Gastrocnemius medialis (tissue), 4 donors: ENCODE measurements at regions of chr17 and their contacts with region 1.

Region 1: DNA sequence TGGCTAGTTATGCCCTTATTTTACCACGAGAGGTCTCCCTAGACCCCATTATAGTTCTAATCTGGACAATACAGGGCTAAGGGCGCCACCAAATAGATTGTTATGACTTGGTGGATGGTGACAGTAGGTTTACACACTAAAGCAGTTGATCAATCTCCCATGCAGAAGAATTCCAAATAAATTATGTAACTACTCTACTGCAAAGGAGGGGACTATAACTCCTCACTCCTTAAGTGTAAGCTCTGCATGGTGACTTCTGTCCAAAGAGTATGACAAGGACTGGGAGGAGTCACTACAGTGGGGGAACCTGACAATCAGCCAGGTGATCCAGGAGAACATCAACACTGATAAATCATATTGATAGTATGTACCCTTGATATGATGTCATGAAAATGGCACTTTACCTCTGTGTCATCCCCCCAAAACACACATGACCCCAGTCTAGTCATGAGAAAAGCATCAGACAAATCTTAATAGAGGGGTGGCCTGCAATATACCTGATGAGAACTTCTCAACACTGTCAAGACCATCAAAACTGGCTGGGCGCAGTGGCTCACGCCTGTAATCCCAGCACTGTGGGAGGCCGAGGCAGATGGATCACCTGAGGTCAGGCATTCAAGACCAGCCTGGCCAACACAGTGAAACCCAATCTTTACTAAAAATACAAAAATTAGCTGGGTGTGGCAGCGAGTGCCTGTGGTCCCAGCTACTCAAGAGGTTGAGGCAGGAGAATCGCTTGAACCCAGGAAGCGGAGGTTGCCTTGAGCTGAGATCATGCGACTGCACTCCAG is 20.1 kb upstream of the YPEL2 start:
- DNase-seq: no peak
- ATAC-seq: peak; percentile 96 to 99
- H3K4me3 ChIP-seq: no peak overlapping the region
- H3K27ac ChIP-seq: no peak overlapping the region
- H3K4me1 ChIP-seq: peaks cover 6% of the 10 kb centered on the region in 2 donors
- H3K27me3 ChIP-seq: no peaks in the 10 kb centered on the region
- CTCF ChIP-seq: peak; percentile 81 to 89 (median 87)
- POLR2A ChIP-seq: no peak

Region 2: DNA sequence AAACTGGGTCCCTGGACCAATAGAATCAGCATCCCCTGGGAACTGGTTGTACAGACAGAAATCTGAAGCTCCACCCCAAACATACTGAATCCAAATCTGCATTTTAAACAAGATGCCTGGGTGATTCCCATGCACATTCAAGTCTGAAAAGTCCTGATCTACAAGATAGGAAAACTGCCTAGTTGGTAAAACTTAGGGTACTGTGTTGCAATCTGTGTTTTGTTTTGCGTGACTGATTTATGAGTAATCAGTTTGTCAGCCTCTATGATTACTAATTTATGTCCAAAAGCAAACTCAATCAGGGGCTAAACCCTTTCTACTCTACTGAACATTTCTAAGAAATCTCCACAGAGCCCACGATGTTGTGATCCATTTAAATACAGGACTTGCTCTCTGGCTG is 123.9 kb after region 1 on chr17:
- in situ Hi-C with region 1: loop called in 3 of 4 experiments (anchors 5 kb)
- intact Hi-C with region 1: loop called (anchors 1 kb)
- DNase-seq: no peak
- ATAC-seq: peak in 1 of 2 donors; percentile 55
- H3K4me3 ChIP-seq: no peak overlapping the region
- H3K27ac ChIP-seq: peak overlapping the region in 1 of 4 donors; percentile 15
- H3K4me1 ChIP-seq: peaks cover 17 to 34% of the 10 kb centered on the region in 2 donors
- H3K27me3 ChIP-seq: no peaks in the 10 kb centered on the region
- CTCF ChIP-seq: no peak
- POLR2A ChIP-seq: no peak

Region 3: DNA sequence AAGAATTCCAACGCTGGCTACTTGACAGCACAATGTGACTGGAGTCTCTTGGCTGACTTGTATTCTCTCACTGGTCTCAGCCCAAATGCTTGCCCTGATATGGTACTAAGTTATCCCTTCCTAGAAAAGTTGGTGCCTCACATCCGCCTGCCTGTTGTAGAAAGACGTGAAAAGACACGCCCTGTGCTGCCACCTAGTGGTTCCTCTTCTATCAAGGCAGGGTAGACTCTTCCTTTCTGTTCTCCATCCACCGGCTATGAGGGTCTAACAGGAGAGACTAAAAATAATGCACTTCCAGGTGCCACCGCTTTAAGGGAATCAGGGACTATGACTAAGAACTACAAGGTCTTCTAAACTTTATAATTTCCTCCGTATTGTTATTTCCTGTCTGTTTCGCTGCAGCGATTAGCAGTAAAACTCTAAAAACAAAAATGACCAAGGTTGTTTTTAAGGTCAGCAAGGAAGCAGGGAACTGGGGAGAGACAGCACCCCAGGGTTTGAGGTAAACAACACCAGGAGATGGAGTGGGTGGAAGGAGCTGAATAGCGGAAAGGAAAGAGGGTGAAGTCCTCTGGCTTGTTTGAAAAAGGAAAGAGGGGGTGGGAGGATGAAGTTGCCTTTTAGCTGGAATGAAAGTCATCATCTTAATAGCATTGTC is 129.6 kb after region 1 on chr17:
- in situ Hi-C with region 1: loop called in 3 of 4 experiments (anchors 5 kb)
- intact Hi-C with region 1: loop called (anchors 1 kb)
- DNase-seq: peak; percentile 82 to 89
- ATAC-seq: peak; percentile 94 to 99
- H3K4me3 ChIP-seq: no peak overlapping the region
- H3K27ac ChIP-seq: peak overlapping the region; percentile 63 to 72 (median 68)
- H3K4me1 ChIP-seq: peaks cover 14 to 36% of the 10 kb centered on the region in 2 donors
- H3K27me3 ChIP-seq: no peaks in the 10 kb centered on the region
- CTCF ChIP-seq: peak; percentile 82 to 93 (median 88)
- POLR2A ChIP-seq: no peak

Region 4: GRCh38 chr17:59521204-59522126 is 210.1 kb after region 1 on chr17:
- in situ Hi-C with region 1: no loop called
- intact Hi-C with region 1: loop called (anchors 5 kb)
- DNase-seq: peak; percentile 13 to 22
- ATAC-seq: peak in 1 of 2 donors; percentile 62
- H3K4me3 ChIP-seq: no peak overlapping the region
- H3K27ac ChIP-seq: no peak overlapping the region
- H3K4me1 ChIP-seq: peaks cover 4 to 6% of the 10 kb centered on the region in 2 donors
- H3K27me3 ChIP-seq: no peaks in the 10 kb centered on the region
- CTCF ChIP-seq: peak; percentile 64 to 84 (median 76)
- POLR2A ChIP-seq: no peak

Region 5: GRCh38 chr17:59565171-59565969 is 254.0 kb after region 1 on chr17 and contains the start of gene DHX40:
- in situ Hi-C with region 1: loop called in 1 of 4 experiments (anchors 25 kb)
- intact Hi-C with region 1: no loop called
- DNase-seq: peak; percentile 91 to 93
- ATAC-seq: peak; percentile 98 to 99
- H3K4me3 ChIP-seq: peak within 1 kb of the TSS; percentile 85 to 100 (median 94)
- H3K27ac ChIP-seq: peak within 1 kb of the TSS; percentile 77 to 95 (median 86)
- H3K4me1 ChIP-seq: peaks cover 8 to 11% of the 10 kb centered on the region in 2 donors
- H3K27me3 ChIP-seq: no peaks in the 10 kb centered on the region
- CTCF ChIP-seq: no peak
- POLR2A ChIP-seq: peak; percentile 34 to 53
- total RNA-seq, gene DHX40: 21.2 to 32.2 (median 26.9) TPM